ENCODE measurements at regions of chr13 and their contacts with region 1.

Region 1: DNA sequence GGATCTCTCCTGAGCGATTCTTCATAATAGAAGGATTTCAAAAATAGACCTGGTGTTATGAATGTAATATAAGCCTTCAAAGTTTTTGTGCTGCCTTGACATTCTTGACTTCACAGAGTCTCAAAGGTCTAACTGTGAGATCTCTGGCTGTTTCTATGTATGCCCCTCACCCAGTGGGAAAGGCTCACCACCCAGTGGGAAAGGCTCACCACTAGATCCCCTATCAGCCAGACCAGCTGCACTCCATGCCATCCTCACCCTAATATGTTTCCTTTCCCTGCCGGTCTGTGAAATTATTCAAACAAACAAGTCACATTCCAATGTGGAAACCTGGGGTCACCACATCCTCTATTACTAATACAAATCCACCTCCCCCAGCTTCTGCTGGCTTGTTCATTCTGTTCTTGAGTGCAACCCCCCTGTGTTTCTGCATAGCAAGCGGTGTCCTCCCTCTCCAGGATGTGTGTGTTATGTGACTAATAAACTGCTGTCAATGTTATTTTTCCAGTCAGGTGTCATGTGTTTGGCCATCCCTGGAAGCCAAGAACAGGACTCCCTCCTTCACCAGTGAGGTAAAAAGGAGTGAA is 13.8 kb upstream of the SLITRK1 start:
- DNase-seq: no peak
- ATAC-seq: no peak
- H3K4me3 Mint-ChIP-seq: no peak overlapping the region
- H3K27ac Mint-ChIP-seq: no peak overlapping the region
- H3K4me1 Mint-ChIP-seq: no peaks in the 10 kb centered on the region
- H3K27me3 Mint-ChIP-seq: no peaks in the 10 kb centered on the region

Region 2: GRCh38 chr13:83657281-83657680 is 238.8 kb before region 1 on chr13:
- CTCF ChIA-PET with region 1: no interaction called
- POLR2A ChIA-PET with region 1: no interaction called
- intact Hi-C with region 1: no loop called
- DNase-seq: no peak
- ATAC-seq: no peak
- H3K4me3 Mint-ChIP-seq: no peak overlapping the region
- H3K27ac Mint-ChIP-seq: no peak overlapping the region
- H3K4me1 Mint-ChIP-seq: no peaks in the 10 kb centered on the region
- H3K27me3 Mint-ChIP-seq: no peaks in the 10 kb centered on the region

Region 3: GRCh38 chr13:85590231-85590931 is 1694.3 kb after region 1 on chr13:
- CTCF ChIA-PET with region 1: no interaction called
- POLR2A ChIA-PET with region 1: no interaction called
- intact Hi-C with region 1: loop called in 1 of 2 experiments (anchors 5 kb)
- DNase-seq: no peak
- ATAC-seq: no peak
- H3K4me3 Mint-ChIP-seq: no peak overlapping the region
- H3K27ac Mint-ChIP-seq: no peak overlapping the region
- H3K4me1 Mint-ChIP-seq: no peaks in the 10 kb centered on the region
- H3K27me3 Mint-ChIP-seq: no peaks in the 10 kb centered on the region

Measured in activated CD4-positive, alpha-beta T cell treated with anti-CD3 and anti-CD28 coated beads for 36 hours (primary cell).